ENCODE measurements at regions of chr13 and their contacts with region 1.

Region 1: GRCh38 chr13:25001476-25002206 is 94.3 kb upstream of the PABPC3 start:
- DNase-seq: no peak
- ATAC-seq: no peak
- H3K4me3 ChIP-seq: no peak overlapping the region
- H3K27ac ChIP-seq: no peak overlapping the region
- H3K4me1 ChIP-seq: no peaks in the 10 kb centered on the region
- H3K27me3 ChIP-seq: no peaks in the 10 kb centered on the region
- CTCF ChIP-seq: no peak
- POLR2A ChIP-seq: no peak
- RAD21 ChIP-seq: no peak

Region 2: DNA sequence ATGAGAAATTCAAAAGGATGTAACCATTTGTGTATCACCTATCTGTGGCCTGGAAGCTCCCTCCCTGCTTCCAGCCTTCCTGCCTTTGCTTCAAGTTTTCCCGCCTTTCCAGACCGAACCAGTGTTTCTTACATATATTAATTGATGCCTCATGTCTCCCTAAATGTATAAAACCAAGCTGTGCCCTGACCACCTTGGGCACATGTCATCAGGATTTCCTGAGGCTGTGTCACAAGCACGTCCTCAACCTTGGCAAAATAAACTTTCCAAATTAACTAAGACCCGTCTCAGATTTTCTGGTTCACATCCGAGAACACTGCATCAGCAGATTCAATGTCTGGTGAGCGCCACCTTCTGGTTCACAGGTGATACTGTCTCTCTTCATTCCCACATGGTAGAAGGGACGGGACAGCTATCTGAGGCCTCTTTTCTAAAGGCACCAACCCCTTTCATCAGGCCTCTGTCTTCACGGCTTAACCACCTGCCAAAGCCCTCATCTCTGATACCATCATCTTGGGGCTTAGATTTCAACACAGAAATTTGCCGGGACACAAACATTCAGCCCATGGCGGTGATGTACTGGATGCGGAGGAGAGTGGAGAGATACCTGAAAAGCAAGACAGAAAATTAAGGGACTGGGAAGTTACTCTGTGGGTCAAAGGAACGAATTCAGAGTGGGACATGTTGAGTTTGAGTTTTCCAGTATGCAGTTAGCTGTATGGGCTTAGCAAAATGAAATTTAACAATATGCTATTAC is 35.6 kb after region 1 on chr13:
- CTCF ChIA-PET with region 1: interaction called, 5 read pairs
- POLR2A ChIA-PET with region 1: no interaction called
- dilution Hi-C with region 1: no loop called
- in situ Hi-C with region 1: no loop called
- intact Hi-C with region 1: loop called (anchors 1 kb)
- DNase-seq: peak; percentile 65
- ATAC-seq: peak; percentile 92
- H3K4me3 ChIP-seq: no peak overlapping the region
- H3K27ac ChIP-seq: no peak overlapping the region
- H3K4me1 ChIP-seq: no peaks in the 10 kb centered on the region
- H3K27me3 ChIP-seq: peaks cover 9% of the 10 kb centered on the region
- CTCF ChIP-seq: peak; percentile 69
- POLR2A ChIP-seq: no peak
- RAD21 ChIP-seq: peak; percentile 58

Region 3: GRCh38 chr13:25103711-25104110 is 102.1 kb after region 1 on chr13:
- CTCF ChIA-PET with region 1: no interaction called
- POLR2A ChIA-PET with region 1: no interaction called
- dilution Hi-C with region 1: no loop called
- in situ Hi-C with region 1: no loop called
- intact Hi-C with region 1: no loop called
- DNase-seq: no peak
- ATAC-seq: no peak
- H3K4me3 ChIP-seq: no peak overlapping the region
- H3K27ac ChIP-seq: no peak overlapping the region
- H3K4me1 ChIP-seq: no peaks in the 10 kb centered on the region
- H3K27me3 ChIP-seq: no peaks in the 10 kb centered on the region
- CTCF ChIP-seq: no peak
- POLR2A ChIP-seq: no peak
- RAD21 ChIP-seq: no peak

Region 4: GRCh38 chr13:25114220-25114619 is 112.6 kb after region 1 on chr13:
- CTCF ChIA-PET with region 1: interaction called, 3 read pairs
- POLR2A ChIA-PET with region 1: no interaction called
- dilution Hi-C with region 1: no loop called
- in situ Hi-C with region 1: no loop called
- intact Hi-C with region 1: loop called (anchors 1 kb)
- DNase-seq: peak; percentile 69
- ATAC-seq: peak; percentile 98
- H3K4me3 ChIP-seq: no peak overlapping the region
- H3K27ac ChIP-seq: no peak overlapping the region
- H3K4me1 ChIP-seq: no peaks in the 10 kb centered on the region
- H3K27me3 ChIP-seq: peaks cover 2% of the 10 kb centered on the region
- CTCF ChIP-seq: peak; percentile 82
- POLR2A ChIP-seq: no peak
- RAD21 ChIP-seq: peak; percentile 70

Region 5: DNA sequence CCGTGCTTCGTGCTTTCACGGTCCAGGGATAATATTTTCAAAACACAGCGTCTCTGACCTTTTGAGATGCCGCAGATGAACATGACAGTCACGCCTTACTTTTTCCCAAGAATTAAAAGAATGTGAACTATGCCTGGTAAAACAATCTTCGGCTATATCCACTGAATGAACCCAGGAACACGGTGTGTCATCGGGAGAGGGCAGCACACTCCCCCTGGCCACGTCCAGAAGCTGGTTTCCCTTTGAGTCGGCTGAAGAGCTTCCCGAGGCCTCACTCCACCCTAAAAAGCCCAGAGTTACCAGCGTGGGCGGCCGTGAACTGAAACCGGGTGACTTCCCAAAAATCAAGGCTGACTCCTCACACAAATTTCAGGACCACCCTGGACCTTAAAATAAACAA is 1073.1 kb after region 1 on chr13:
- CTCF ChIA-PET with region 1: no interaction called
- POLR2A ChIA-PET with region 1: no interaction called
- dilution Hi-C with region 1: no loop called
- in situ Hi-C with region 1: no loop called
- intact Hi-C with region 1: loop called (anchors 10 kb)
- DNase-seq: peak; percentile 14
- ATAC-seq: peak; percentile 82
- H3K4me3 ChIP-seq: no peak overlapping the region
- H3K27ac ChIP-seq: no peak overlapping the region
- H3K4me1 ChIP-seq: no peaks in the 10 kb centered on the region
- H3K27me3 ChIP-seq: peaks cover 1% of the 10 kb centered on the region; the same call in 1 of the 2 replicates
- CTCF ChIP-seq: 0 out of 2 replicates have a peak, but pooled peaks have one; percentile 9
- POLR2A ChIP-seq: no peak
- RAD21 ChIP-seq: no peak